CD14-positive monocyte (primary cell): ENCODE measurements at regions of chr7 and their contacts with region 1.

Region 1: GRCh38 chr7:151519765-151520418 is at the start of gene RHEB:
- DNase-seq: peak; percentile 98 to 99 (median 99)
- H3K4me3 ChIP-seq: peak within 1 kb of the TSS; percentile 68 to 86 (median 75)
- H3K4me3 Mint-ChIP-seq: peak within 1 kb of the TSS; percentile 96 to 98
- H3K27ac ChIP-seq: peak within 1 kb of the TSS; percentile 74 to 88
- H3K27ac Mint-ChIP-seq: peak within 1 kb of the TSS; percentile 89 to 97 (median 96)
- H3K4me1 ChIP-seq: peaks cover 42 to 44% of the 10 kb centered on the region in 2 donors
- H3K4me1 Mint-ChIP-seq: peaks cover 39% of the 10 kb centered on the region
- H3K27me3 ChIP-seq: no peaks in the 10 kb centered on the region
- H3K27me3 Mint-ChIP-seq: peaks cover 0 to 2% (median 0%) of the 10 kb centered on the region in 3 donors
- CTCF ChIP-seq: no peak
- polyA plus RNA-seq, gene RHEB: 20.4 to 96.1 (median 95.8) TPM

Region 2: GRCh38 chr7:151226875-151227782 is 292.8 kb before region 1 on chr7 and contains the start of gene ABCF2:
- intact Hi-C with region 1: loop called in 1 of 2 experiments (anchors 10 kb)
- DNase-seq: peak; percentile 97 to 98 (median 98)
- H3K4me3 ChIP-seq: peak within 1 kb of the TSS; percentile 47 to 94 (median 66)
- H3K4me3 Mint-ChIP-seq: peak within 1 kb of the TSS; percentile 93 to 96
- H3K27ac ChIP-seq: peak within 1 kb of the TSS; percentile 51 to 85
- H3K27ac Mint-ChIP-seq: peak within 1 kb of the TSS; percentile 90 to 97 (median 93)
- H3K4me1 ChIP-seq: peaks cover 29 to 34% of the 10 kb centered on the region in 2 donors
- H3K4me1 Mint-ChIP-seq: peaks cover 34% of the 10 kb centered on the region
- H3K27me3 ChIP-seq: no peaks in the 10 kb centered on the region
- H3K27me3 Mint-ChIP-seq: peaks cover 0 to 3% (median 1%) of the 10 kb centered on the region in 3 donors
- CTCF ChIP-seq: no peak
- polyA plus RNA-seq, gene ABCF2: 18.0 to 22.0 (median 21.1) TPM

Region 3: DNA sequence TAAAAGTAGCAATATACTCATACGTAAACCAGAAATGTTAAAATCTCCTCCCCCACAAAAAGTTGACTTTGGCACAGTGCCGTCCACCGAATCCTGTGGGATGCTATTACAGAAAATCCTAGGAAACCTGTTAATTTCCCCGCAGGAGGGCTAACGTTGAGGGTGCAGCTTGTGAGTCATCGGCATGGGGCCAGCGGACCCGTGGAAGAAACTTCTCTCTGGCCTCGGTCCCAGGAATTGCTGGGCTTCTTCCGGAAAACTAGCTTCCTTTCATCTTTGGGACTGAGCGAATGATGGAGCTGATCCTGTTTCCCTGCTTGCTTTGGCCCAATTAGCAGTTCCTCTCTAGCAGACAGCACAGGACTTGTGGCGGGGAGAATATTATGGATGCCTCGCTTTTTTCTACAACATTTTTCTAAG is 93.4 kb before region 1 on chr7:
- intact Hi-C with region 1: no loop called
- DNase-seq: no peak
- H3K4me3 ChIP-seq: no peak overlapping the region
- H3K4me3 Mint-ChIP-seq: no peak overlapping the region
- H3K27ac ChIP-seq: no peak overlapping the region
- H3K27ac Mint-ChIP-seq: no peak overlapping the region
- H3K4me1 ChIP-seq: no peaks in the 10 kb centered on the region
- H3K4me1 Mint-ChIP-seq: peaks cover 15% of the 10 kb centered on the region
- H3K27me3 ChIP-seq: no peaks in the 10 kb centered on the region
- H3K27me3 Mint-ChIP-seq: peaks cover 2 to 7% (median 6%) of the 10 kb centered on the region in 3 donors
- CTCF ChIP-seq: no peak

Region 4: GRCh38 chr7:151491859-151492258 is 28.0 kb before region 1 on chr7:
- intact Hi-C with region 1: loop called in 1 of 2 experiments (anchors 5 kb)
- DNase-seq: peak; percentile 29 to 61 (median 38)
- H3K4me3 ChIP-seq: no peak overlapping the region
- H3K4me3 Mint-ChIP-seq: no peak overlapping the region
- H3K27ac ChIP-seq: peak overlapping the region in 1 of 2 donors; percentile 29
- H3K27ac Mint-ChIP-seq: peak overlapping the region in 1 of 7 donors; percentile 42
- H3K4me1 ChIP-seq: peaks cover 10 to 15% of the 10 kb centered on the region in 2 donors
- H3K4me1 Mint-ChIP-seq: peaks cover 31% of the 10 kb centered on the region
- H3K27me3 ChIP-seq: no peaks in the 10 kb centered on the region
- H3K27me3 Mint-ChIP-seq: no peaks in the 10 kb centered on the region
- CTCF ChIP-seq: no peak

Region 5: GRCh38 chr7:151631968-151632749 is 112.3 kb after region 1 on chr7:
- intact Hi-C with region 1: loop called in 1 of 2 experiments (anchors 5 kb)
- DNase-seq: peak; percentile 68 to 84 (median 78)
- H3K4me3 ChIP-seq: peak overlapping the region; percentile 66 to 99 (median 82)
- H3K4me3 Mint-ChIP-seq: peak overlapping the region; percentile 92 to 98
- H3K27ac ChIP-seq: peak overlapping the region; percentile 92 to 94
- H3K27ac Mint-ChIP-seq: peak overlapping the region; percentile 95 to 100 (median 99)
- H3K4me1 ChIP-seq: peaks cover 21 to 25% of the 10 kb centered on the region in 2 donors
- H3K4me1 Mint-ChIP-seq: peaks cover 22% of the 10 kb centered on the region
- H3K27me3 ChIP-seq: no peaks in the 10 kb centered on the region
- H3K27me3 Mint-ChIP-seq: no peaks in the 10 kb centered on the region
- CTCF ChIP-seq: peak; percentile 55